CD4-positive, alpha-beta memory T cell (primary cell): ENCODE measurements at regions of chr2 and their contacts with region 1.

Region 1: GRCh38 chr2:204325468-204325867 is 219.8 kb upstream of the PARD3B start:
- DNase-seq: peak; percentile 47 to 69 (median 68)
- H3K4me3 ChIP-seq: no peak overlapping the region
- H3K4me3 Mint-ChIP-seq: no peak overlapping the region
- H3K27ac ChIP-seq: no peak overlapping the region
- H3K27ac Mint-ChIP-seq: peak overlapping the region in 1 of 7 donors; percentile 50
- H3K4me1 ChIP-seq: no peaks in the 10 kb centered on the region
- H3K4me1 Mint-ChIP-seq: peaks cover 0 to 2% (median under 1%) of the 10 kb centered on the region in 4 donors
- H3K27me3 ChIP-seq: no peaks in the 10 kb centered on the region
- H3K27me3 Mint-ChIP-seq: peaks cover 2 to 15% of the 10 kb centered on the region in 2 donors

Region 2: DNA sequence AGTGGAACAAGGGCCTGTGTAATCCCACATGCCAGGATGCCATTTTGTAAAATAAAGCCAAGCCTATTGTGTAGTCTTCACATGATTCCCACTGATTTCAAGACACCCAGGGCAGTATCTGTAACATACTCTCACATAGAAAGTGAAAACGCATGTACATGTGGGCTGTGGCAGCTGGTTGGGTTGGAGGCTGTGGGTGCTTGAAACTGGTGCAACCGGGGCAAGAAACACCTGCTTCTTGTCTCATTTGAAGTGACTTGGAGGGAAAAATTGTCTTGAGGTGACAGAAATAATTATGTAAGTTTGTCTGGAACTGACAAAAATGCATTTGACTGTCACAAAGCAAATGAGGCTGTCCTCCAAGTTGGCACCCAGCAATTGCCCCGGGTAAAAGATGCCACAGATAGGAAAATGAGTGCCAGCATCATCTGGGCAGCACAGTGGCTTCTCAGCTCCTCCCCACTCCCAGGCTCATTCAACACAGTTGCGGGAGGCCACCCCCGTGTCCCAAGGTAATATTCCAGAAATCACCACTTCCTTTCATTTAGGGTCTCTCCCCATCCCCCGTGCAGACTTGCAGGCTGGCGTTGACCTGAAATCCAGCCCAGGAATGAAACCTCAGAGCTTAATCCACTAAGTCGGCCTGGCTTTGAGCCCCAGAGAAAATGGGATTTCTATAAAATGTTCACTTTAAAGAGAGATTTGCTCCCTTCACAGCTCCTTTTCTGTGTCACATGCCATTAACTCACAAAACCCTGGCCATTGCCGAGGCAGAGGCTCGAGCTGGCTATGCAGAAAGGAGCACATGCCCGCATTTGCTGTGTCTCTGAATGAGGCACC is 74.1 kb before region 1 on chr2:
- CTCF ChIA-PET with region 1: no interaction called
- POLR2A ChIA-PET with region 1: no interaction called
- intact Hi-C with region 1: no loop called
- DNase-seq: no peak
- H3K4me3 ChIP-seq: no peak overlapping the region
- H3K4me3 Mint-ChIP-seq: no peak overlapping the region
- H3K27ac ChIP-seq: no peak overlapping the region
- H3K27ac Mint-ChIP-seq: no peak overlapping the region
- H3K4me1 ChIP-seq: peaks cover 7% of the 10 kb centered on the region
- H3K4me1 Mint-ChIP-seq: no peaks in the 10 kb centered on the region
- H3K27me3 ChIP-seq: no peaks in the 10 kb centered on the region
- H3K27me3 Mint-ChIP-seq: peaks cover 15 to 21% of the 10 kb centered on the region in 2 donors

Region 3: GRCh38 chr2:204313256-204313655 is 12.2 kb before region 1 on chr2:
- CTCF ChIA-PET with region 1: interaction called, 14 read pairs
- POLR2A ChIA-PET with region 1: no interaction called
- intact Hi-C with region 1: no loop called
- DNase-seq: no peak
- H3K4me3 ChIP-seq: no peak overlapping the region
- H3K4me3 Mint-ChIP-seq: no peak overlapping the region
- H3K27ac ChIP-seq: no peak overlapping the region
- H3K27ac Mint-ChIP-seq: no peak overlapping the region
- H3K4me1 ChIP-seq: no peaks in the 10 kb centered on the region
- H3K4me1 Mint-ChIP-seq: no peaks in the 10 kb centered on the region
- H3K27me3 ChIP-seq: peaks cover 4% of the 10 kb centered on the region
- H3K27me3 Mint-ChIP-seq: peaks cover 13 to 25% of the 10 kb centered on the region in 2 donors

Region 4: DNA sequence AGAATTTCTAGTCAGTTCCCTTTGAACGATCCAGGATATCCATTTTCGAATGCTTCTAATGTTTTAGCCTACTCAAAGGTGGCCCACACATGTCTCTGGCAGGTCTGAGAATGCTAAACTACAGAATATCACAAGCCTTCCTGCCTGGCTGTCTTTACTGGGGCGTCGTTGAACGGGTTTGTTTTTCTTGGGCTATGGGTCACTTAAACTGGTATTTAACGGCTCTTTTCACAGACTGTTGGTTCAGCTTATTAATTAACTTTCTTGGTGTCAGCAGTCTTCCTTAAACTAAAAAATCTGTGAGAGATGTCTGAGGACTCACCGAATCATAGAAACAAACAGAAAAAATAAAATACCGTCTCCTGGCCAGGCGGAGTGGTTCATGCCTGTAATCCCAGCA is 793.7 kb after region 1 on chr2:
- CTCF ChIA-PET with region 1: no interaction called
- POLR2A ChIA-PET with region 1: no interaction called
- intact Hi-C with region 1: no loop called
- DNase-seq: no peak
- H3K4me3 ChIP-seq: no peak overlapping the region
- H3K4me3 Mint-ChIP-seq: no peak overlapping the region
- H3K27ac ChIP-seq: no peak overlapping the region
- H3K27ac Mint-ChIP-seq: peak overlapping the region in 1 of 7 donors; percentile 13
- H3K4me1 ChIP-seq: no peaks in the 10 kb centered on the region
- H3K4me1 Mint-ChIP-seq: peaks cover 0 to 6% (median 1%) of the 10 kb centered on the region in 4 donors
- H3K27me3 ChIP-seq: no peaks in the 10 kb centered on the region
- H3K27me3 Mint-ChIP-seq: peaks cover 1 to 3% of the 10 kb centered on the region in 2 donors

Region 5: GRCh38 chr2:205680067-205680466 is 1354.6 kb after region 1 on chr2:
- CTCF ChIA-PET with region 1: interaction called, 13 read pairs
- POLR2A ChIA-PET with region 1: no interaction called
- intact Hi-C with region 1: loop called (anchors 1 kb)
- DNase-seq: peak in 4 of 5 donors; percentile 32 to 39 (median 38)
- H3K4me3 ChIP-seq: no peak overlapping the region
- H3K4me3 Mint-ChIP-seq: peak overlapping the region in 4 of 8 donors; percentile 45 to 63 (median 50)
- H3K27ac ChIP-seq: no peak overlapping the region
- H3K27ac Mint-ChIP-seq: no peak overlapping the region
- H3K4me1 ChIP-seq: peaks cover 18% of the 10 kb centered on the region
- H3K4me1 Mint-ChIP-seq: peaks cover 5 to 29% (median 20%) of the 10 kb centered on the region in 4 donors
- H3K27me3 ChIP-seq: peaks cover 22% of the 10 kb centered on the region
- H3K27me3 Mint-ChIP-seq: peaks cover 35 to 36% of the 10 kb centered on the region in 2 donors

Region 6: GRCh38 chr2:205808486-205809121 is 1483.1 kb after region 1 on chr2:
- CTCF ChIA-PET with region 1: no interaction called
- POLR2A ChIA-PET with region 1: no interaction called
- intact Hi-C with region 1: loop called (anchors 1 kb)
- DNase-seq: no peak
- H3K4me3 ChIP-seq: no peak overlapping the region
- H3K4me3 Mint-ChIP-seq: no peak overlapping the region
- H3K27ac ChIP-seq: no peak overlapping the region
- H3K27ac Mint-ChIP-seq: no peak overlapping the region
- H3K4me1 ChIP-seq: no peaks in the 10 kb centered on the region
- H3K4me1 Mint-ChIP-seq: no peaks in the 10 kb centered on the region
- H3K27me3 ChIP-seq: no peaks in the 10 kb centered on the region
- H3K27me3 Mint-ChIP-seq: peaks cover 2 to 6% of the 10 kb centered on the region in 2 donors

Region 7: GRCh38 chr2:205925373-205926337 is 1600.2 kb after region 1 on chr2:
- CTCF ChIA-PET with region 1: interaction called, 9 read pairs
- POLR2A ChIA-PET with region 1: no interaction called
- intact Hi-C with region 1: loop called (anchors 1 kb)
- DNase-seq: peak; percentile 45 to 55 (median 49)
- H3K4me3 ChIP-seq: no peak overlapping the region
- H3K4me3 Mint-ChIP-seq: peak overlapping the region in 4 of 8 donors; percentile 21 to 60 (median 41)
- H3K27ac ChIP-seq: no peak overlapping the region
- H3K27ac Mint-ChIP-seq: peak overlapping the region in 1 of 7 donors; percentile 7
- H3K4me1 ChIP-seq: peaks cover 10% of the 10 kb centered on the region
- H3K4me1 Mint-ChIP-seq: peaks cover 4 to 15% (median 8%) of the 10 kb centered on the region in 4 donors
- H3K27me3 ChIP-seq: peaks cover 8% of the 10 kb centered on the region
- H3K27me3 Mint-ChIP-seq: peaks cover 46 to 51% of the 10 kb centered on the region in 2 donors